ENCODE measurements at regions of chr9 and their contacts with region 1.

Region 1: GRCh38 chr9:87950765-87951488 is 23.4 kb downstream of the CDK20 start:
- DNase-seq: peak; percentile 50
- H3K4me3 ChIP-seq: no peak overlapping the region
- H3K27ac ChIP-seq: no peak overlapping the region
- H3K4me1 ChIP-seq: no peaks in the 10 kb centered on the region
- CTCF ChIP-seq: peak; percentile 82

Region 2: DNA sequence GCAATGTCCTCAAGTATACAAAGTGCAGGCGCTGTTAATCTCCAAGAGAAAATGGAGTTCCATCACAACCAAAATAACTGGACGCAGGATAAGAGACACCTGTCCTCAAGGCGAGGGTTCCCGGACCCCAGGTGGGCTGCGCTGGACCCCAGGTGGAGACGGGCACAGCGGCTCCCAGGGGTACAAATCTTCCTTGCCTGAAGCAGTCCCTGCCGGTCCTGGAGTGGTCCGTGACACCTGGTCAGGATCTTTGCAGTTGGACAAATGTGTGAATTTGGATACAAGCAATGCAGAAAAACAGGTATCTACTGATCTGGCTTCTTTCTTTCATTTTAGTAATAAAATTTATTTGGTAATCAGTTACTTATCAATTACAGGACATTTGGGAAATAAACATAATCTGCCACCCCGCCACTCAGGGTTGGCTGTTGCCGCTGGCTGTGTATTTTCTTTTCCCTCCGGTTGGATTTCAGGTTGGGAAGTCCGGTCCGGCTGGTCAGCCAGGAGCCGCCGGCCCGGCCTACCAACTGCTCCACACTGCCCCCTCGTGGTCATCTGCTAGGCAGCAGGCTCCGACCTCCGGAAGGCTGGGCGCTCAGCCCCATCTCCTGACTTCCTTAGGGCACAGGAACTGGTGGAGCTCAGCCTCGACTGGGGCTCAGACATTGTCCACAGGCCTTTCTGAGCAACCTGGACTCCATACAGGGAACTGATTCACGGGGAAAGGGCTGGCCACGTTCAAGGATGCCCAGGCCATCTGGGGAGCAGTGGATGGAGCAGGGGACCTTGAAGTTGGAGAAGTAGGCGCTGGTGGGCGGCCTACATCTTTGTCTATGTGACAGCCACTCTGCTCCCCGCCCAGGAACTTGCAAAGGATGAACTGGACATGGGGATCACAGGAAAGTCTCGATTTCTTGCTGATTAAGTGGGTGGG is 627.5 kb after region 1 on chr9:
- CTCF ChIA-PET with region 1: interaction called, 3 read pairs
- POLR2A ChIA-PET with region 1: no interaction called
- intact Hi-C with region 1: loop called (anchors 2 kb)
- DNase-seq: peak; percentile 62
- H3K4me3 ChIP-seq: no peak overlapping the region
- H3K27ac ChIP-seq: no peak overlapping the region
- H3K4me1 ChIP-seq: peaks cover 5% of the 10 kb centered on the region
- CTCF ChIP-seq: peak; percentile 97

Region 3: GRCh38 chr9:88741335-88741734 is 790.4 kb after region 1 on chr9:
- CTCF ChIA-PET with region 1: no interaction called
- POLR2A ChIA-PET with region 1: no interaction called
- intact Hi-C with region 1: loop called (anchors 5 kb)
- DNase-seq: peak; percentile 18
- H3K4me3 ChIP-seq: no peak overlapping the region
- H3K27ac ChIP-seq: no peak overlapping the region
- H3K4me1 ChIP-seq: no peaks in the 10 kb centered on the region
- CTCF ChIP-seq: peak; percentile 79